Left cardiac atrium (tissue), 4 donors: ENCODE measurements at regions of chr1 and their contacts with region 1.

Region 1: GRCh38 chr1:239898062-239898730 is 193.5 kb upstream of the FMN2 start:
- DNase-seq: peak; percentile 76
- ATAC-seq: peak; percentile 81 to 92

Region 2: DNA sequence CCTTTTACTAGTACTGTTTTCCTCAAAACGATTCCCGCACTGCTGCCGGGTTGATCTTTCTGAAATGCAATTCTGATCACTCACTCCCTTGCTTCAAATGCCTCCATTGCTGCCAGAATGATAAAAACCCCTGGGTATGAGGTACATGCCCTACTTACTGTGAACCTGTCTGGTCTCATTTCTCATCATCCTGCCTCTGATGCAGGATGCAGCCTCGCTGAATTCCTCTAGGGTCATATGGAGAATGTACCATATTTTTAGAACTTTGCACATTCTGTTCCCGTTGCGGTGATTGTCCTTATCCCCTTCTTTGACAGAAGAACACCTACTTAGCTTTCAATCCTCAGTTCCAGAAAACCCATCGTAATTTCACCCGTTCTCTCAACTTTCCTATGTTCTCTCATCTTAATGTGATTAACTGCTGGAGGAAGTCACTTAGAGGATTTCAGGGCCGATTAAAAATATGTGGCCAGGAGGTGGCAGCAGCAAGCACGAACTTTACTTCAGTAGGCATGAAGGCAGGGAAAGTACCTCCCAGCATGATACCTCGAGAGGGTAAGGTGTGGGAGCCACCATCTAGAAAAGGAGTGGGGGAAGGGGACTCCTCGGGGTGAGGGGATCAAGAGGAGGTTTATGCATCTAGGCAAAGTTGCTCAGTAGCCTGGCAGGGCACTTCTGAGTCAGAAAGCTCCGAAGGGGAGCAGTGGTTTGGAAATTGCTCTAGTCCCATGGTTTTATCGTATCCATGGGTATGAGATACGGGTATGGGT is 1646.0 kb before region 1 on chr1:
- intact Hi-C with region 1: loop called in 1 of 2 experiments (anchors 5 kb)
- DNase-seq: no peak
- ATAC-seq: no peak

Region 3: DNA sequence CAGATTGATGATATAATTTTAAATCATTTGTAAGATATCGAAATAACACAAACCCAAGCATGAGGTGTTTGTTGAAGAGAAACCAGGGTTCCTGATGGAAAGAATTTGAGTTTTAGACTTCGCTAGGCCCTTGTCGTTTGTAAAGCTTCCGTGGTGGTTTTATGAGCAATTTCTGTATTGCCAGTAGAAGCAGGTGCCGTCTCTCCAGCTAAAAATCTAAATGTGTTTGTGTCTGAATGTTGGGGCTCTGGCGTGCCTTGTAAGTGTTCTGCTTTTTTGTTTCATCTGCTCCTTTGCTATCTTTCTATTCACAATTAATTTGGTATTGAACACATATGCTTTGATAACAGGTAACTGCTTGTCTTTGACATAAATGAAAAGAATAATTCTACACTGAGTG is 484.3 kb before region 1 on chr1:
- intact Hi-C with region 1: loop called in 1 of 2 experiments (anchors 5 kb)
- DNase-seq: no peak
- ATAC-seq: no peak

Region 4: DNA sequence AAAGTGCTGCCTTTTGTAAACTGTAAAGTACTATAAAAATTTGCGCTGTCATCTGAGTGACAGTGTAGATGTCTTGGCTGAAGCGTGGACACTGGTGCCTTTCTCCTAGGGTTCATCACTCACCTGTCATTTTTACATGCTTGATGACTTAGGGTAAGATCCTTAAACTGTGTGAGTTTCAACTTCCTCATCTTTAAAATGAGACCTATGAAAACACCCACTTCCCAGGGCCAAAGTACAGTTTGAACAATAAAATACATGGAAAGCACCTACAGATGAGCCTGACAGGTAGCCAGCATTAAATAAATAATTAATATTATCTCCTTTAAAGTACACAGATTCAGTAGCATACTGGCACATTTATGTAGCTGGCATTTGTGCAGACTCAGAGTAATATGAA is 201.9 kb before region 1 on chr1:
- intact Hi-C with region 1: no loop called
- DNase-seq: no peak
- ATAC-seq: no peak

Region 5: DNA sequence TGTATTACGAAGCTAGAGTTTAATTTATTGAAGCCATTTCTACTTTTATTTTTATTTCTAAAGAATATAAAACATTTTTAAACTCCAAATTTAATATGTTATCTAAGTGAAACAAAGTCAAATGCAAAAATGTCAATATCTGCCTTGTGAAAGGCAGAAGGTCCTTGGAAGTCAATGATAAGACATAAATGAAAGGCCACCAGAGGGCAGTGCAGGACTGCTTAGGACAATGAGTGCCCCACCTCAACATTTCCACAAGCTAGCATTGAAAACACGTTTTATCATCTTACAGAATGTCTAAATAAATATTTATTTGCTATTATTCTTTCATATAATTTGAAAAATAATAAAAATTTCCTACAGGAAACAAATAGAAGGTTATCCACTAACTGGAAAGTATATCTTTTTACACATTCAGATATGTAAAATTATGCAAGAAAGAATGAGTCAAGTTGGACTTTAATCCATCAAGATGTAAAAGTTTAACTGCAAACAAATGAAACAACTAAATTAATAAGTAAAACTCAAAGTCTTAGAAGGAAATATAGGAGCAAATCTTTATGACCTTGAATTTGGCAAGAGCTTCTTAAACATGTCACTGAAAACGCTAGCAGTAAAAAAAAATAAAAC is 53.4 kb after region 1 on chr1:
- intact Hi-C with region 1: no loop called
- DNase-seq: peak; percentile 71
- ATAC-seq: peak; percentile 41 to 55